ENCODE measurements at regions of chr9 and their contacts with region 1.

Region 1: GRCh38 chr9:33211695-33212393 is 28.1 kb upstream of the SPINK4 start:
- DNase-seq: peak in 1 of 4 experiments; percentile 13
- ATAC-seq: no peak
- H3K4me3 ChIP-seq: no peak overlapping the region
- H3K27ac ChIP-seq: no peak overlapping the region
- H3K4me1 ChIP-seq: no peaks in the 10 kb centered on the region; a peak in 1 of 5 replicates
- H3K27me3 ChIP-seq: no peaks in the 10 kb centered on the region
- CTCF ChIP-seq: no peak
- EP300 ChIP-seq: no peak
- POLR2A ChIP-seq: no peak
- RAD21 ChIP-seq: no peak

Region 2: GRCh38 chr9:33051144-33051543 is 160.7 kb before region 1 on chr9:
- CTCF ChIA-PET with region 1: no interaction called
- POLR2A ChIA-PET with region 1: no interaction called
- in situ Hi-C with region 1: no loop called
- intact Hi-C with region 1: no loop called
- DNase-seq: no peak
- ATAC-seq: no peak
- H3K4me3 ChIP-seq: no peak overlapping the region
- H3K27ac ChIP-seq: no peak overlapping the region
- H3K4me1 ChIP-seq: no peaks in the 10 kb centered on the region
- H3K27me3 ChIP-seq: no peaks in the 10 kb centered on the region
- CTCF ChIP-seq: no peak
- EP300 ChIP-seq: no peak
- POLR2A ChIP-seq: no peak
- RAD21 ChIP-seq: no peak

Region 3: GRCh38 chr9:33170464-33171415 is 41.1 kb before region 1 on chr9:
- CTCF ChIA-PET with region 1: no interaction called
- POLR2A ChIA-PET with region 1: no interaction called
- in situ Hi-C with region 1: no loop called
- intact Hi-C with region 1: loop called (anchors 5 kb)
- DNase-seq: no peak
- ATAC-seq: no peak
- H3K4me3 ChIP-seq: no peak overlapping the region
- H3K27ac ChIP-seq: no peak overlapping the region
- H3K4me1 ChIP-seq: peaks cover 31 to 33% of the 10 kb centered on the region in 2 experiments; a peak in 4 of 5 replicates
- H3K27me3 ChIP-seq: no peaks in the 10 kb centered on the region
- CTCF ChIP-seq: peak in 2 of 3 experiments; percentile 1 to 18; a peak in 1 of 6 replicates
- EP300 ChIP-seq: no peak
- POLR2A ChIP-seq: no peak
- RAD21 ChIP-seq: peak in 1 of 2 experiments; percentile 27; a peak in 1 of 4 replicates

Region 4: GRCh38 chr9:33381231-33381791 is 169.5 kb after region 1 on chr9:
- CTCF ChIA-PET with region 1: no interaction called
- POLR2A ChIA-PET with region 1: no interaction called
- in situ Hi-C with region 1: no loop called
- intact Hi-C with region 1: no loop called
- DNase-seq: peak in 2 of 4 experiments; percentile 26 to 37
- ATAC-seq: peak; percentile 71
- H3K4me3 ChIP-seq: no peak overlapping the region
- H3K27ac ChIP-seq: no peak overlapping the region
- H3K4me1 ChIP-seq: peaks cover 8 to 9% of the 10 kb centered on the region in 2 experiments
- H3K27me3 ChIP-seq: no peaks in the 10 kb centered on the region
- CTCF ChIP-seq: no peak
- EP300 ChIP-seq: no peak
- POLR2A ChIP-seq: no peak
- RAD21 ChIP-seq: no peak